PC-9 (cell line): ENCODE measurements at regions of chr19 and their contacts with region 1.

Region 1: DNA sequence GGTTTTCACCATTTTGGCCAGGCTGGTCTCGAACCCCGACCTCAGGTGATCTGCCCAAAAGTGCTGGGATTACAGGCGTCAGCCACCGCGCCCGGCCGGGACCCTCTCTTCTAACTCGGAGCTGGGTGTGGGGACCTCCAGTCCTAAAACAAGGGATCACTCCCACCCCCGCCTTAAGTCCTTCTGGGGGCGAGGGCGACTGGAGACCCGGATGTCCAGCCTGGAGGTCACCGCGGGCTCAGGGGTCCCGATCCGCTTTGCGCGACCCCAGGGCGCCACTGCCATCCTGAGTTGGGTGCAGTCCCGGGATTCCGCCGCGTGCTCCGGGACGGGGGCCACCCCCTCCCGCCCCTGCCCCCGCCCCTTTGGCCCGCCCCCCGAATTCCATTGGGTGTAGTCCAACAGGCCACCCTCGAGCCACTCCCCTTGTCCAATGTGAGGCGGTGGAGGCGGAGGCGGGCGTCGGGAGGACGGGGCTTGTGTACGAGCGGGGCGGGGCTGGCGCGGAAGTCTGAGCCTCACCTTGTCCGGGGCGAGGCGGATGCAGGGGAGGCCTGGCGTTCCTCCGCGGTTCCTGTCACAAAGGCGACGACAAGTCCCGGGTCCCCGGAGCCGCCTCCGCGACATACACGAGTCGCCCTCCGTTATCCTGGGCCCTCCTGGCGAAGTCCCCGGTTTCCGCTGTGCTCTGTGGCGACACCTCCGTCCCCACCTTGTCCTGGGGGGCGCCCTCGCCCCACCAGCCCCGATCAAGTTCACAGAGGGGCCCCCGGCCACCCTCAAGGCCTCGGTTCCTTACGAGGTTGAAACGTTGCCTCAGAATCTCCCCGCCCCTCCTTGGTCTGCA is 1.0 kb downstream of the LDLR start:
- DNase-seq: peak; percentile 93 to 96
- H3K4me3 ChIP-seq: peak overlapping the region; percentile 90
- H3K27ac ChIP-seq: peak overlapping the region; percentile 98
- H3K4me1 ChIP-seq: peaks cover 68% of the 10 kb centered on the region
- H3K27me3 ChIP-seq: no peaks in the 10 kb centered on the region
- CTCF ChIP-seq: no peak

Region 2: GRCh38 chr19:9785367-9786331 is 1304.6 kb before region 1 on chr19:
- CTCF ChIA-PET with region 1: no interaction called
- POLR2A ChIA-PET with region 1: interaction called, 15 read pairs
- intact Hi-C with region 1: no loop called
- DNase-seq: peak; percentile 92 to 96
- H3K4me3 ChIP-seq: peak overlapping the region; percentile 62
- H3K27ac ChIP-seq: peak overlapping the region; percentile 83
- H3K4me1 ChIP-seq: peaks cover 18% of the 10 kb centered on the region
- H3K27me3 ChIP-seq: no peaks in the 10 kb centered on the region
- CTCF ChIP-seq: no peak

Region 3: GRCh38 chr19:10899151-10899653 is 191.1 kb before region 1 on chr19:
- CTCF ChIA-PET with region 1: no interaction called
- POLR2A ChIA-PET with region 1: interaction called, 11 read pairs
- intact Hi-C with region 1: no loop called
- DNase-seq: peak; percentile 96 to 97
- H3K4me3 ChIP-seq: peak overlapping the region; percentile 8; the same call in 1 of the 2 replicates
- H3K27ac ChIP-seq: peak overlapping the region; percentile 35
- H3K4me1 ChIP-seq: peaks cover 37% of the 10 kb centered on the region
- H3K27me3 ChIP-seq: no peaks in the 10 kb centered on the region
- CTCF ChIP-seq: no peak

Region 4: DNA sequence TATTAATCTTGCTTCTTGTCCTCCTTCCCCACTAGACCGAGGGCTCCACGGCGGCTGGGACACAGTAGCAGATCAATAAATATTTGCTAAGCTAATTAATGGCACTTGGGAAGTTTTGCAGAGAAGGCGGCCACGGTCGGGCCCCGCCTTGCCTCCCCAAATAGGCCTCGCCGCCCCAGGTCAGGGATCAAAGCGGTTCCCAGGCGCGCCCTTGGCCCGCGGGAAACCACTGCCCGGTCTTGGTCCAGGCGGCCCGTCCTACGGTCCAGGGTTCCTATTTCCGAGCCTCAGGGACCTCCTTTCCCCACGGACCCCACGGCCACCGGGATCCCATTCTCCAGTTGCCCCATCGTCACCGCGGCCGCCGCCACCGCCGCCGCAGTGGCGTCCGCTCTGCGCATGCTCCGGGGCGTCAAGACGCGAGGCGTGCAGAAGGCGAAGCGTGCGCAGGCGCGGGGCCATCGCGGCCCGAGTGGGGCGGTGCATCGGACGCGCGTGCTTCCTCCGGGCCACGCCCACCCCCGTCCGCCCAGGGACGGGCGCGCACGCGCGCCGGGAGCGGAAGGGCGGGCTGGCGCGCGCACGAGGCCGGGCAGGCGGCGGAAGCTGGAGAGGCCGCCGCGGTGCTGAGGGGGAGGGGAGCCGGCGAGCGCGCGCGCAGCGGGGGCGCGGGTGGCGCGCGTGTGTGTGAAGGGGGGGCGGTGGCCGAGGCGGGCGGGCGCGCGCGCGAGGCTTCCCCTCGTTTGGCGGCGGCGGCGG is 129.8 kb before region 1 on chr19 and contains the start of gene SMARCA4:
- CTCF ChIA-PET with region 1: no interaction called
- POLR2A ChIA-PET with region 1: no interaction called
- intact Hi-C with region 1: loop called (anchors 5 kb)
- DNase-seq: peak; percentile 84 to 98
- H3K4me3 ChIP-seq: peak within 1 kb of the TSS; percentile 81
- H3K27ac ChIP-seq: peak within 1 kb of the TSS; percentile 60
- H3K4me1 ChIP-seq: peaks cover 29% of the 10 kb centered on the region
- H3K27me3 ChIP-seq: no peaks in the 10 kb centered on the region
- CTCF ChIP-seq: no peak
- total RNA-seq, gene SMARCA4: 128 and 136 TPM in 2 replicates

Region 5: GRCh38 chr19:11041966-11042627 is 48.2 kb before region 1 on chr19:
- CTCF ChIA-PET with region 1: interaction called, 3 read pairs
- POLR2A ChIA-PET with region 1: interaction called, 5 read pairs
- intact Hi-C with region 1: loop called (anchors 1 kb)
- DNase-seq: peak; percentile 79 to 90
- H3K4me3 ChIP-seq: no peak overlapping the region
- H3K27ac ChIP-seq: no peak overlapping the region; the same call in 1 of the 2 replicates
- H3K4me1 ChIP-seq: no peaks in the 10 kb centered on the region
- H3K27me3 ChIP-seq: no peaks in the 10 kb centered on the region
- CTCF ChIP-seq: no peak

Region 6: GRCh38 chr19:11106477-11106876 is 16.2 kb after region 1 on chr19:
- CTCF ChIA-PET with region 1: no interaction called
- POLR2A ChIA-PET with region 1: no interaction called
- intact Hi-C with region 1: no loop called
- DNase-seq: no peak
- H3K4me3 ChIP-seq: no peak overlapping the region
- H3K27ac ChIP-seq: no peak overlapping the region
- H3K4me1 ChIP-seq: no peaks in the 10 kb centered on the region
- H3K27me3 ChIP-seq: no peaks in the 10 kb centered on the region
- CTCF ChIP-seq: no peak